ENCODE measurements at regions of chr20 and their contacts with region 1.

Region 1: GRCh38 chr20:16761305-16761829 is 13.2 kb downstream of the OTOR start:
- DNase-seq: peak; percentile 44
- H3K4me3 ChIP-seq: no peak overlapping the region
- H3K27ac ChIP-seq: no peak overlapping the region
- H3K27me3 ChIP-seq: peaks cover 2% of the 10 kb centered on the region
- CTCF ChIP-seq: peak; percentile 81

Region 2: GRCh38 chr20:16639027-16639941 is 122.1 kb before region 1 on chr20:
- CTCF ChIA-PET with region 1: no interaction called
- POLR2A ChIA-PET with region 1: no interaction called
- DNase-seq: no peak
- H3K4me3 ChIP-seq: no peak overlapping the region
- H3K27ac ChIP-seq: no peak overlapping the region
- H3K27me3 ChIP-seq: peaks cover 5% of the 10 kb centered on the region
- CTCF ChIP-seq: no peak

Region 3: GRCh38 chr20:16749573-16749972 is 11.8 kb before region 1 on chr20:
- CTCF ChIA-PET with region 1: interaction called, 16 read pairs
- POLR2A ChIA-PET with region 1: no interaction called
- DNase-seq: no peak
- H3K4me3 ChIP-seq: no peak overlapping the region
- H3K27ac ChIP-seq: no peak overlapping the region
- H3K27me3 ChIP-seq: peaks cover 10% of the 10 kb centered on the region
- CTCF ChIP-seq: peak; percentile 28